ENCODE measurements at regions of chr6 and their contacts with region 1.

Region 1: GRCh38 chr6:32984605-32985389 is 16.4 kb downstream of the BRD2 start:
- DNase-seq: peak; percentile 87 to 93
- H3K4me3 ChIP-seq: no peak overlapping the region
- H3K27ac ChIP-seq: no peak overlapping the region
- H3K4me1 ChIP-seq: no peaks in the 10 kb centered on the region
- H3K27me3 ChIP-seq: no peaks in the 10 kb centered on the region
- CTCF ChIP-seq: peak; percentile 91 to 94 (median 93)
- POLR2A ChIP-seq: no peak

Region 2: DNA sequence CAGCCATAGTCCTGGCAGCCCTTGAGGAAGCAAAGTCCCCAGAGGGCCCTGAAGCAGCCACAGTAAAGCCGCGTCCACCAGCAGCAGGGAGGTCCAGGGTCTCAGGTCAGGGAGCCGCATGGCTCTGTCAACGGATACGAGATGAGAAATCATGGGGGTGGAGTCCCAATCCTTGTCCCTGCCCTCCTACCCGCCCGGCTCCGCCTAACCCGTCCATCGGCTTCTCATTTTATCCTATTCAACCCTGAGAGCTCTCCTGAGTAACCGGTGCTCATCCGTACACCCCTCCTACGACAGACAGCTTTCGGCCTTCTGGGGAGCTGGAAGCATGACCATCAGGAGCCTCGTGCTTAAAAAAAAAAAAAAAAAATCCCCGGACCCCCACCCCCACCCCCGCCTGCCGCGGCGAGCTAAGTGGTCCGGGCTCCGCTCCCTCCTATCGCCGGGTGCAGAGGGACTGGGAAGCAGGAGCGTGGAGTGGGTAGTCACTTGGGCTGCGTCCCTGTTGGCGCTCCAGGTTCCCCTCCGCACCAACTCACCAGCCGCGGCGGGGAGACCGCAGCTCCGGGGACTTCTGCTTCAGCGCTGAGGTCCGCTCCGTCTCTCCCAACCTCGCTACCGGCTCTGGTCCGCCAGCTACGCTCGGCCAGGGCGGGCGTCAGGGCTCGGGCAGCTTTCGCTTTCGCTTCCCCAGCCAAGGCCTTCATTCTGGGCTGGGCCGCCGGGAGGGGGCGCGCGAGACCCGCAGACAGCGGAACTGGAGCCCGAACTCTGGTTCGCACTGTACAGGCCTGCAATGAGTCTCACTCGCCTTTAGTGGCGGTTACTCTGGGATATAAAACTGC is 146.5 kb before region 1 on chr6 and contains the start of gene TAP2:
- intact Hi-C with region 1: no loop called
- DNase-seq: peak; percentile 95 to 97
- H3K4me3 ChIP-seq: peak within 1 kb of the TSS; percentile 77 to 84
- H3K27ac ChIP-seq: peak within 1 kb of the TSS; percentile 98
- H3K4me1 ChIP-seq: no peaks in the 10 kb centered on the region
- H3K27me3 ChIP-seq: no peaks in the 10 kb centered on the region
- CTCF ChIP-seq: peak; percentile 95 to 99 (median 98)
- POLR2A ChIP-seq: peak; percentile 68 to 73
- total RNA-seq, gene TAP2: 3.0 to 42.4 (median 21.5) TPM

Region 3: DNA sequence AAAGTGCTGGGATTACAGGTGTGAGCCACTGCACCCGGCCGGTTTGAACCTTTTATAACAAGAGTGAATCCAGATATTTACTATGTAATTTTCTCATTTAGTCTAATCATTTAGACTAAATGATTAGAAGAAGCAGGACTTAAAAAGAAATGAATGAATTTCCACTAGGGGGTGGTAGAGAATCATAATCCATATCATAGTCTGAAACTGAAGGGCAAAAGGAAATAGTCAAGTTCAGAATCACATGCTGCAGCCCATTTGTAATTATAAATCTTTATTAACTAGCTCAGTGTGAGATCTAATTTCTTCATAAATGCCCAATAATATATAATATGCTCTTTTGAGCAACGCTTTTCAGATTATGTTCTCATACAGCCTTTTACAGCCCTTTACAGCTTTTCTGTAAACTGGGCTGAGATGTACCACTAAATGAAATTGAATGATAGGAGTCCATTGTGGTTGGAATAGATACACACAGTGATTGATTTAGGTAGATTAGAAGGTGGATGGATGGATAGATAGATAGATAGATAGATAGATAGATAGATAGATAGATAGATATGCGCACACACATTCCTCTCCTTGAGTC is 99.0 kb before region 1 on chr6:
- intact Hi-C with region 1: loop called (anchors 5 kb)
- DNase-seq: no peak
- H3K4me3 ChIP-seq: no peak overlapping the region
- H3K27ac ChIP-seq: no peak overlapping the region
- H3K4me1 ChIP-seq: peaks cover 0 to 7% of the 10 kb centered on the region in 2 donors
- H3K27me3 ChIP-seq: no peaks in the 10 kb centered on the region
- CTCF ChIP-seq: peak; percentile 58 to 78 (median 76)
- POLR2A ChIP-seq: no peak

Region 4: DNA sequence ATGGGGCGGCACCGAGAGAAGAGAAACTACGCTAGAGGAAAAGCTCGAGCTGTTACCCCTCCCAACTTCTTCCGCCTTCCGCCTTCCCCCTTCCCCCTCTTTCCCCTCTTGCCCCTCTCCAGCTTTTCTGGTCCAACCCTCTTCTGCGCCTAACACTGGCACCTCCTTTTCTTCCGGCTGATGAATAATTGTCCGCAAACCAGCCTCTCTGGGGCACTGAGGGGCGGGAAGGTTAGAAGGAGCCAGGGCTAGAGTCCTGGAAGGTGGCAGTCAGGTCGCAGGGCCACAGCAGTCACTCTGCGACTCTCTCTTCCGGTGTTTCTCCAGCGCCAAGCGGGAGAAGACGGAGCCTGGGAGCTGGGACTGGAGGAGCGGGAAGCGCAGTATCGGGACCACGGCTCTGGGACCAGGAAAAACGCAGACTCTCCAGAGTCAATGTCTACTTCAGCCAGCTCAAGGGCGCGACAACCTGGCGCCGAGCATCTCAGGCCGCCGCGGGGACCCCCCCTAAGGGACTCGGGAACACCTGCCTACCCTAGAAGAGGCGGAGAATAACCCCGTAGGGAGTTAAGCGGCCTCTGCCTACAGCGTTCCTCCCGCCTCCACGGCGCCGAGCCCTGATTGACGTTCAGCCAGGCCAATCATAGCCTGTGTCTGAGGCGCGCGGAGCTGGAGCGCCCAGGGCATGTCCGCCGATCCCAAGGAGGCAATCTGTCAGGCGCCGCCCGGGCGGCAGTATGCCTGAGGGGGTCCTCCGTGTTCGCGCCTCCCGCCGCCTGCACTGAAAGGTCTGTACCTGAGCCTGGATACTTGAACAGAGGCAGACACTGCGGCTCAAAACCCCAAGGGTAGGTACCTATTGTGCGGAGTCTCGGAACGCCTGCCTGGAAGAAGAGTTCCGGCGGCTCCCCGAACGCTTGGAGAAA is 90.5 kb before region 1 on chr6:
- intact Hi-C with region 1: loop called (anchors 5 kb)
- DNase-seq: peak; percentile 92 to 96
- H3K4me3 ChIP-seq: peak overlapping the region; percentile 45 to 68
- H3K27ac ChIP-seq: peak overlapping the region; percentile 86 to 93
- H3K4me1 ChIP-seq: peaks cover 0 to 4% of the 10 kb centered on the region in 2 donors
- H3K27me3 ChIP-seq: no peaks in the 10 kb centered on the region
- CTCF ChIP-seq: peak in 2 of 4 experiments; percentile 8 to 23
- POLR2A ChIP-seq: peak; percentile 79 to 82

Region 5: DNA sequence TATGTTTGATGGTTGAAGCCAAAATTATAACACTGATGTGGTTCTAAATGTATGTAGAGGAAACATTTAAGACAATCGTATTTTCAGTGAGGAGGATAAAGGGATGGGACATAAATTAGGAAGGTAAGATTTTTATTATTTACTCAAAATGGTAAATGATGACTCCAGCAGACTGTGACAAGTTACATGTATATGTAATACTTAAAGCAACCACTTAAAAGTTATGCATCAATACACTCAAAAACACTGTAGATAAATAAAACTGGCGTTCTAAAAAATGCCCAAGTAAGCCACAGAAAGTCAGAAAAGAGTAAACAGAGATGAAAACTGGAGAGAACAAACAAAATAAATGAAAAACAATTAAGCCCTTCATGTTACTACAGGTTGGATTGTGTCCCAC is 62.7 kb before region 1 on chr6:
- intact Hi-C with region 1: no loop called
- DNase-seq: no peak
- H3K4me3 ChIP-seq: no peak overlapping the region
- H3K27ac ChIP-seq: no peak overlapping the region
- H3K4me1 ChIP-seq: no peaks in the 10 kb centered on the region
- H3K27me3 ChIP-seq: no peaks in the 10 kb centered on the region
- CTCF ChIP-seq: no peak
- POLR2A ChIP-seq: no peak

Region 6: DNA sequence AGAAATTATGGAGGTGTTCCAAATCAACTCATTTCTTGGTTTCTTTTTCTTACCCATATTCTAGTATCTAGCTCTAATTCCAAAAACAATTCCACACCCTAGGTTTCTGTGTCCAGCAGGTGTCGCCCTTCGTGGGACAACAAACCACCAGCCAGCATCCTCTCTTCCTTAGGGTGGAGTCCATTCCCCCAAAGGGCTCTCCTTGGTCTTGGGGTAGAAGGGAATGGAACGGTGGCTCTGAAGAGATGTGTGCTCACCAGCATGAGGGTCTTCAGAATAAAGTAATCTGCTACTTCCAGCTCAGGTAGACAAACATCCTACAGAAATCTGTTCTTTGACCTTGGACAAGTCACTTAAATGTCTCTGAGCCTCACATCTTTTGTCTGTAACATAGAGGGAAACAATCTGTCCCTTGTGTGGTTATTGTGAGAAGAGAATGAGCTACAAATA is 51.1 kb before region 1 on chr6:
- intact Hi-C with region 1: loop called (anchors 10 kb)
- DNase-seq: peak; percentile 78 to 84
- H3K4me3 ChIP-seq: no peak overlapping the region
- H3K27ac ChIP-seq: no peak overlapping the region
- H3K4me1 ChIP-seq: no peaks in the 10 kb centered on the region
- H3K27me3 ChIP-seq: no peaks in the 10 kb centered on the region
- CTCF ChIP-seq: peak; percentile 79 to 89 (median 82)
- POLR2A ChIP-seq: no peak

Measured in uterus (tissue), 4 donors.